Activated CD4-positive, alpha-beta T cell treated with anti-CD3 and anti-CD28 coated beads for 36 hours (primary cell): ENCODE measurements at regions of chr5 and their contacts with region 1.

Region 1: DNA sequence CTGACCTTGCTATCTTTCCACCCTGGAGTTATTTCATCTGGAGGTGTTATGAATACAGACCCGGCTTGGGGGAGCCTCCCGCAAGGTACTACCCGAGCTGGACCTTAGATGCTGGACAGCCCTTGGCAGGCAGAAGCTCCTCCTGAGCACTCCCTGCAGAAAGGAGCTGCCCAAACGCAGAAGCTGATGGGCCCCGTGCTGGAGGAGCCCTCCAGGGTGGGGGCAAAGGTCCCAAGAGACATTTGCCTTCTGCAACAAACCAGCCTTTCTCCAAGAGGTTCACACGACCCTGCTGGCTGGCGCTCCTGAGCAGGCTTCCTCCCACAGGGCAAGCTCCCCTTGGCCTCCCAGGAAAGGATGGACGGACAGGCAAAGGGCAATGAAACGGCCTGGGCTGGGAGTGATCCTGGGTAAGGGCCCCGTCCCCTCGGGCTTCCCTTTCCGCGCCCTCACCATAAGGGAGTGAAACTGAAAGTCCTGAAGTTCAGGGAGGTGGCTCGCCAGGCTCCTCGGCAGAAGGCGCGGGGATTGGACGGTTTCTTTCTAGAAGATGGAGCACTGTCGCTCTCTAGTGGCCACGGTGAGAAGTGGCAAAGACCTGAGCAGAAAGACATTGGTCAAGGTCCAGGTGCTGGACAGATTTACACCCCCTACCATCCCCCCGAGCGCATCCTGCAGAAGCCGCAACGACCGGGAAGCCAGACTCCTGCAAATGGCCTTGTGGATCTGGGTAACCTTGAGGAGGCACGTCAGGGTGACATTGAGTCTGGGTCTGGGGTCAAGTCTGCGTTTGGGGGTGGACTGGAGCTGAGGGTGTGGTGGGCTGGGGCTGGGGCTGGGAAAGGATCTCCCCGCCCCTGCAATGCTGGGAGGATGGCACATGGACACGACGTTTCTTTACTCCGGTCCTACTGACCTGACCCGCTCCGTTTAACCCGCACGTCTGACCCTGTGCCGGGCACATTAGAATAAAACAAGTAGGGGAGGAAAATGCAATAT is 56.4 kb downstream of the NEURL1B start:
- DNase-seq: peak; percentile 91
- ATAC-seq: peak; percentile 95
- H3K4me3 Mint-ChIP-seq: peak overlapping the region; percentile 68
- H3K27ac Mint-ChIP-seq: peak overlapping the region; percentile 75
- H3K4me1 Mint-ChIP-seq: peaks cover 11% of the 10 kb centered on the region
- H3K27me3 Mint-ChIP-seq: peaks cover 13% of the 10 kb centered on the region

Region 2: DNA sequence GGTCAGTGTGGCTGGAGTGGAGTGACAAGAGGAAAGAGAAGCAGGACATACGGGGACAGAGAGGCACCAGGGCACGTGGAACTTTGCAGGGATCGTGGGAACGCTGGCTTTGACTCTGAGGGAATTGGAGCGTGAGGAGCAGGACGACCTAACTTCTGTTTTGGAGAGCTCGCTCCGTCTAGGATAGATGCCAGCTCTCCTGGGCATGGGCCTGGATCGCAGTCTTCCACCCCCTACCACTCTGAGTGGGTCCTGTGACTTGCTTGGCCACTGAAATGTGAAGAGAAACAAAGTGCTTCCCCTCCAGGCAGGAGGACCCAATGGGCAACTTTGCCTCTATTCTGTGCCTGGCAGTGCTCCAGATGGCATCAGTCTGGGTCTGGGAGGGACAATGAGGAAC is 234.4 kb before region 1 on chr5:
- CTCF ChIA-PET with region 1: interaction called, 5 read pairs
- POLR2A ChIA-PET with region 1: no interaction called
- intact Hi-C with region 1: loop called (anchors 1 to 5 kb)
- DNase-seq: no peak
- ATAC-seq: no peak
- H3K4me3 Mint-ChIP-seq: no peak overlapping the region
- H3K27ac Mint-ChIP-seq: no peak overlapping the region
- H3K4me1 Mint-ChIP-seq: peaks cover 14% of the 10 kb centered on the region
- H3K27me3 Mint-ChIP-seq: no peaks in the 10 kb centered on the region

Region 3: GRCh38 chr5:172479044-172479783 is 218.2 kb before region 1 on chr5:
- CTCF ChIA-PET with region 1: interaction called, 13 read pairs
- POLR2A ChIA-PET with region 1: no interaction called
- intact Hi-C with region 1: loop called (anchors 1 kb)
- DNase-seq: peak; percentile 81
- ATAC-seq: peak; percentile 98
- H3K4me3 Mint-ChIP-seq: no peak overlapping the region
- H3K27ac Mint-ChIP-seq: no peak overlapping the region
- H3K4me1 Mint-ChIP-seq: no peaks in the 10 kb centered on the region
- H3K27me3 Mint-ChIP-seq: peaks cover 2% of the 10 kb centered on the region

Region 4: GRCh38 chr5:172640822-172641358 is 56.5 kb before region 1 on chr5 and contains the start of gene NEURL1B:
- CTCF ChIA-PET with region 1: interaction called, 7 read pairs
- POLR2A ChIA-PET with region 1: no interaction called
- intact Hi-C with region 1: loop called in 1 of 2 experiments (anchors 2 kb)
- DNase-seq: peak; percentile 75
- ATAC-seq: peak; percentile 86
- H3K4me3 Mint-ChIP-seq: no peak within 1 kb of the TSS
- H3K27ac Mint-ChIP-seq: no peak within 1 kb of the TSS
- H3K4me1 Mint-ChIP-seq: no peaks in the 10 kb centered on the region
- H3K27me3 Mint-ChIP-seq: peaks cover 38% of the 10 kb centered on the region
- total RNA-seq, gene NEURL1B: 0.16 to 0.19 TPM

Region 5: DNA sequence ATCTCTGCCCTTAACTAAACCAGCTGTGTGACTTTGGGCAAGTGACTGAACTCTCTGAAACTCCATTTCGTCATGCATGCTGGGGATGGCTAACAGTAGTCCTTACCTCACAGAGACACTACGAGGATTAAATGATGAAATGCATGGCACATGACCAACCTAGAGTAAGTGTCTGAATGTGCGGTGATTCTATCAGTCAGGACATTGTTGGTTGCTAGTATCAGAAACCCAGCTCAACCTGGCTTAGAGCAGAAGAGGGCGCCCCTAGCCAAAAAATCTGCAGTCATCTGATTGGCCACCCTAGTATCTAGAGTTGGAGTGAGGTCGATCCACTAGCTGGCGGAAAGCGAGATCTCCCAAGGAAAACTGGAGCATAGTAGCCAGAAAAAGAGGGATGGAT is 31.2 kb before region 1 on chr5:
- CTCF ChIA-PET with region 1: interaction called, 4 read pairs
- POLR2A ChIA-PET with region 1: no interaction called
- intact Hi-C with region 1: loop called in 1 of 2 experiments (anchors 1 kb)
- DNase-seq: no peak
- ATAC-seq: no peak
- H3K4me3 Mint-ChIP-seq: no peak overlapping the region
- H3K27ac Mint-ChIP-seq: no peak overlapping the region
- H3K4me1 Mint-ChIP-seq: no peaks in the 10 kb centered on the region
- H3K27me3 Mint-ChIP-seq: peaks cover 2% of the 10 kb centered on the region

Region 6: DNA sequence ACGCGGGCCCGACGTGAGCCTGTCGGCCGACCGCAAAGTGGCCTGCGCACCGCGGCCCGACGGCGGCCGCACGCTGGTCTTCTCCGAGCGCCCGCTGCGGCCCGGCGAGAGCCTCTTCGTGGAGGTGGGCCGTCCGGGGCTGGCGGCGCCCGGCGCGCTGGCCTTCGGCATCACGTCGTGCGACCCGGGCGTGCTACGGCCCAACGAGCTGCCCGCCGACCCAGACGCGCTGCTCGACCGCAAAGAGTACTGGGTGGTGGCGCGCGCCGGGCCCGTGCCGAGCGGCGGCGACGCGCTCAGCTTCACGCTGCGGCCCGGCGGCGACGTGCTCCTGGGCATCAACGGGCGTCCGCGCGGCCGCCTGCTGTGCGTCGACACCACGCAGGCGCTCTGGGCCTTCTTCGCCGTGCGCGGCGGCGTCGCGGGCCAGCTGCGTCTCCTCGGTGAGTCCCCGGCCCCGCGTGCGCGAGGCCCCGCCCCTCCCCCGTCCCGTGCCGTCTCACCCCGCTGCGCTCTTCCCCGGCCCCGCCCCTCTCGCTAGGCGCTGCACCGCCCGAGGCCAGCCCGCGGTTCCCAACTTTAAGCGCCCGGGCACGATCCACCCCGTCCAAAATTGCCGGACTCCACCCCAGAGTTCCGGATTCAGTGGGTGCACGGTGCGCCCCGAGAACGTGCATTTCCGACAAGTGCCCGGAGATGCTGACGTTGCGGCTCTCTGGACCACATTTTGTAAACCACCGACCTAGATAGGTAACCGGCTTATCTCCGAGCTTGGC is 13.5 kb before region 1 on chr5:
- CTCF ChIA-PET with region 1: interaction called, 12 read pairs
- POLR2A ChIA-PET with region 1: no interaction called
- intact Hi-C with region 1: no loop called
- DNase-seq: peak; percentile 80
- ATAC-seq: peak; percentile 83
- H3K4me3 Mint-ChIP-seq: peak overlapping the region; percentile 54
- H3K27ac Mint-ChIP-seq: no peak overlapping the region
- H3K4me1 Mint-ChIP-seq: peaks cover 15% of the 10 kb centered on the region
- H3K27me3 Mint-ChIP-seq: peaks cover 4% of the 10 kb centered on the region